ENCODE measurements at regions of chr2 and their contacts with region 1.

Region 1: DNA sequence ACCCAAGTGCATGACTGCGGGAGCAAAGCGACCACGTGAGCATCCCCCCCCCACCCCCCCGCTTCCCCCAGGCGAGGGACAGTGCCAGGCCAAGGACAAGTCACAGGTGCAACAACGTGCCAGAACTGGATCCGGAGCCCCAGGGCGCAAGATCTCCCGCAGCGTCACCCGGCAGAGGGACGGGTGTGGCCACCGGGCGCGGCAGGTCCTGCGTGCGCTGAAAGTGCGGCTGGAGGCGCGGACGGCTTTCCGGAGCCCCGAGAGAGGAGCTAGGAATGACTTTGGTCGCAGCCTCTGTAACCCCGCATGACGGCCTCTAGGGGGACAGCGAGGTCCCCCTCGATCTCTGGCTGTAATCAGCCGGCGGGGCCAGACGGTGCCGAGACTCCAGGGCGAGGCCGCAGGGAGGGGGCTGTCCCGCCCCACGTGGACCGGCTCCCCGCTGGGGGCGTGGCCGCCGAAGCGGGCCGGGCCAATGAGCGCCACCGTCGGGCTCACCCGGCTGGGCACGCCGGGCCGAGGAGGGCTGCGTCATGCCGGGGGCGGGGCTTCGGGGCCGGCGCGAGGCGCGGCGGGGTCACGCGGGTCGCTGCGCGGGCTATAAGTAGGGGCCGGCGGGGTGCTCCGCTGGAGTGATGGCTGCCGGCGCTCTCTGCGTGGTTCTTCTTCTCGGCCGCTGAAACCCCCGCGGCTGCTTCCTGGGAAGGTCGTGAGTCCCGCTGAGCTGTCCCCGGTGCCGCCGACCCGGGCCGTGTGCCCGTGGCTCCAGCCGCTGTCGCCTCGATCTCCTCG is at the start of gene SLC20A1:
- DNase-seq: peak; percentile 95 to 100 (median 99)
- ATAC-seq: peak; percentile 98
- H3K4me3 ChIP-seq: peak within 1 kb of the TSS; percentile 71
- H3K4me3 Mint-ChIP-seq: peak within 1 kb of the TSS; percentile 89 to 100 (median 93)
- H3K27ac ChIP-seq: peak within 1 kb of the TSS; percentile 94
- H3K27ac Mint-ChIP-seq: peak within 1 kb of the TSS; percentile 79 to 94 (median 91)
- H3K4me1 ChIP-seq: peaks cover 34 to 47% of the 10 kb centered on the region in 2 donors
- H3K4me1 Mint-ChIP-seq: peaks cover 37 to 74% (median 58%) of the 10 kb centered on the region in 7 donors
- H3K27me3 ChIP-seq: no peaks in the 10 kb centered on the region
- H3K27me3 Mint-ChIP-seq: no peaks in the 10 kb centered on the region
- total RNA-seq, gene SLC20A1: 94.4 to 164 (median 120) TPM

Region 2: GRCh38 chr2:110677530-110678456 is 1967.7 kb before region 1 on chr2 and contains the start of gene BUB1:
- CTCF ChIA-PET with region 1: no interaction called
- POLR2A ChIA-PET with region 1: no interaction called
- intact Hi-C with region 1: loop called in 1 of 2 experiments (anchors 5 kb)
- DNase-seq: peak; percentile 88 to 96 (median 94)
- ATAC-seq: peak; percentile 97
- H3K4me3 ChIP-seq: peak within 1 kb of the TSS; percentile 87
- H3K4me3 Mint-ChIP-seq: peak within 1 kb of the TSS; percentile 91 to 100 (median 99)
- H3K27ac ChIP-seq: peak within 1 kb of the TSS; percentile 73
- H3K27ac Mint-ChIP-seq: peak within 1 kb of the TSS; percentile 92 to 100 (median 98)
- H3K4me1 ChIP-seq: peaks cover 0 to 17% of the 10 kb centered on the region in 2 donors
- H3K4me1 Mint-ChIP-seq: peaks cover 5 to 45% (median 20%) of the 10 kb centered on the region in 7 donors
- H3K27me3 ChIP-seq: no peaks in the 10 kb centered on the region
- H3K27me3 Mint-ChIP-seq: peaks cover 0 to 16% (median 0%) of the 10 kb centered on the region in 5 donors
- total RNA-seq, gene BUB1: 2.3 to 73.7 (median 2.6) TPM

Region 3: GRCh38 chr2:112275306-112275886 is 370.1 kb before region 1 on chr2 and contains the start of gene ZC3H6:
- CTCF ChIA-PET with region 1: no interaction called
- POLR2A ChIA-PET with region 1: no interaction called
- intact Hi-C with region 1: loop called in 1 of 2 experiments (anchors 10 kb)
- DNase-seq: peak; percentile 96 to 100 (median 100)
- ATAC-seq: peak; percentile 98
- H3K4me3 ChIP-seq: peak within 1 kb of the TSS; percentile 99
- H3K4me3 Mint-ChIP-seq: peak within 1 kb of the TSS; percentile 85 to 95 (median 94)
- H3K27ac ChIP-seq: peak within 1 kb of the TSS; percentile 100
- H3K27ac Mint-ChIP-seq: peak within 1 kb of the TSS; percentile 90 to 99 (median 98)
- H3K4me1 ChIP-seq: peaks cover 14 to 18% of the 10 kb centered on the region in 2 donors
- H3K4me1 Mint-ChIP-seq: peaks cover 9 to 36% (median 25%) of the 10 kb centered on the region in 7 donors
- H3K27me3 ChIP-seq: no peaks in the 10 kb centered on the region
- H3K27me3 Mint-ChIP-seq: peaks cover 0 to 3% (median 0%) of the 10 kb centered on the region in 5 donors
- total RNA-seq, gene ZC3H6: 11.8 to 42.1 (median 23.7) TPM

Region 4: DNA sequence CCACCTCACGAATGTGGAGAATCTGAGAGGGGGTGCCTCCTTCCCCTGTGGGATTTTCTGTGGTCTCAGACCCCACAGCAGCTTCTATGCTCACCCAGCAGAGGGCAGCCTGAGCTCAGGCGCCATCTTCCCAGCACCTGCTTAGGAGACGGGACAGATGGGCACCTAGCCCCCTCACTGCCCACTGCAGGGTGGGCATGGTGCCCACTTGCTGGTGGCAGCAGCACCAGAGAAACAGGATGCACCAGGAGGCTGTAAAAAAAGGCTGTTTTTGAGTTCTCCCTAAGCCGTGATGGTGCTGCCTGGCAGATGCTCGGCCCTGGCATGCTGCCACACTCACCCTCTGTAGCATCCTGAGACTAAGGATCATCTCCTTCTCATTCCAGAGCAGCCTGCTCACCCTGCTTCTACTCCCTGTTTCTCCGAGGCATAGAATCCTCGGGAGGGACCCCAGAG is 18.9 kb before region 1 on chr2:
- CTCF ChIA-PET with region 1: interaction called, 87 read pairs
- POLR2A ChIA-PET with region 1: interaction called, 418 read pairs
- intact Hi-C with region 1: loop called (anchors 1 kb)
- DNase-seq: peak; percentile 47 to 81 (median 67)
- ATAC-seq: peak; percentile 70
- H3K4me3 ChIP-seq: peak overlapping the region; percentile 61
- H3K4me3 Mint-ChIP-seq: peak overlapping the region; percentile 47 to 81 (median 72)
- H3K27ac ChIP-seq: peak overlapping the region; percentile 29
- H3K27ac Mint-ChIP-seq: peak overlapping the region in 8 of 9 donors; percentile 80 to 99 (median 94)
- H3K4me1 ChIP-seq: peaks cover 49 to 64% of the 10 kb centered on the region in 2 donors
- H3K4me1 Mint-ChIP-seq: peaks cover 34 to 88% (median 55%) of the 10 kb centered on the region in 7 donors
- H3K27me3 ChIP-seq: no peaks in the 10 kb centered on the region
- H3K27me3 Mint-ChIP-seq: no peaks in the 10 kb centered on the region

Region 5: GRCh38 chr2:112692496-112692911 is 47.0 kb after region 1 on chr2:
- CTCF ChIA-PET with region 1: no interaction called
- POLR2A ChIA-PET with region 1: no interaction called
- intact Hi-C with region 1: loop called (anchors 1 kb)
- DNase-seq: peak in 3 of 9 donors; percentile 7 to 69 (median 16)
- ATAC-seq: peak; percentile 81
- H3K4me3 ChIP-seq: no peak overlapping the region
- H3K4me3 Mint-ChIP-seq: peak overlapping the region in 1 of 10 donors; percentile 78
- H3K27ac ChIP-seq: no peak overlapping the region
- H3K27ac Mint-ChIP-seq: peak overlapping the region in 6 of 9 donors; percentile 45 to 91 (median 56)
- H3K4me1 ChIP-seq: peaks cover 6 to 16% of the 10 kb centered on the region in 2 donors
- H3K4me1 Mint-ChIP-seq: peaks cover 0 to 38% (median 18%) of the 10 kb centered on the region in 7 donors
- H3K27me3 ChIP-seq: no peaks in the 10 kb centered on the region
- H3K27me3 Mint-ChIP-seq: no peaks in the 10 kb centered on the region

Region 6: GRCh38 chr2:112764071-112765044 is 118.9 kb after region 1 on chr2 and contains the start of gene CKAP2L:
- CTCF ChIA-PET with region 1: no interaction called
- POLR2A ChIA-PET with region 1: no interaction called
- intact Hi-C with region 1: loop called in 1 of 2 experiments (anchors 1 kb)
- DNase-seq: peak; percentile 85 to 97 (median 94)
- ATAC-seq: peak; percentile 99
- H3K4me3 ChIP-seq: peak within 1 kb of the TSS; percentile 82
- H3K4me3 Mint-ChIP-seq: peak within 1 kb of the TSS; percentile 90 to 97 (median 92)
- H3K27ac ChIP-seq: peak within 1 kb of the TSS; percentile 65
- H3K27ac Mint-ChIP-seq: peak within 1 kb of the TSS; percentile 29 to 95 (median 71)
- H3K4me1 ChIP-seq: peaks cover 12 to 16% of the 10 kb centered on the region in 2 donors
- H3K4me1 Mint-ChIP-seq: peaks cover 15 to 61% (median 30%) of the 10 kb centered on the region in 7 donors
- H3K27me3 ChIP-seq: no peaks in the 10 kb centered on the region
- H3K27me3 Mint-ChIP-seq: no peaks in the 10 kb centered on the region
- total RNA-seq, gene CKAP2L: 0.69 to 36.2 (median 2.4) TPM in 3 of 5 experiments, not detected in the others